Endothelial cell of umbilical vein (primary cell): ENCODE measurements at regions of chr17 and their contacts with region 1.

Region 1: GRCh38 chr17:79741751-79742588 is 11.2 kb downstream of the ENPP7 start:
- DNase-seq: peak; percentile 62
- H3K4me3 ChIP-seq: no peak overlapping the region
- H3K27ac ChIP-seq: no peak overlapping the region
- H3K4me1 ChIP-seq: no peaks in the 10 kb centered on the region
- H3K27me3 ChIP-seq: peaks cover 14 to 29% of the 10 kb centered on the region in 2 experiments
- CTCF ChIP-seq: peak; percentile 88 to 93
- POLR2A ChIP-seq: no peak

Region 2: GRCh38 chr17:79658811-79659207 is 83.2 kb before region 1 on chr17:
- CTCF ChIA-PET with region 1: no interaction called
- POLR2A ChIA-PET with region 1: no interaction called
- dilution Hi-C with region 1: no loop called
- intact Hi-C with region 1: no loop called
- DNase-seq: peak; percentile 32
- H3K4me3 ChIP-seq: no peak overlapping the region
- H3K27ac ChIP-seq: no peak overlapping the region
- H3K4me1 ChIP-seq: peaks cover 10% of the 10 kb centered on the region
- H3K27me3 ChIP-seq: peaks cover 3% of the 10 kb centered on the region in 2 experiments
- CTCF ChIP-seq: peak; percentile 43 to 68
- POLR2A ChIP-seq: no peak

Region 3: DNA sequence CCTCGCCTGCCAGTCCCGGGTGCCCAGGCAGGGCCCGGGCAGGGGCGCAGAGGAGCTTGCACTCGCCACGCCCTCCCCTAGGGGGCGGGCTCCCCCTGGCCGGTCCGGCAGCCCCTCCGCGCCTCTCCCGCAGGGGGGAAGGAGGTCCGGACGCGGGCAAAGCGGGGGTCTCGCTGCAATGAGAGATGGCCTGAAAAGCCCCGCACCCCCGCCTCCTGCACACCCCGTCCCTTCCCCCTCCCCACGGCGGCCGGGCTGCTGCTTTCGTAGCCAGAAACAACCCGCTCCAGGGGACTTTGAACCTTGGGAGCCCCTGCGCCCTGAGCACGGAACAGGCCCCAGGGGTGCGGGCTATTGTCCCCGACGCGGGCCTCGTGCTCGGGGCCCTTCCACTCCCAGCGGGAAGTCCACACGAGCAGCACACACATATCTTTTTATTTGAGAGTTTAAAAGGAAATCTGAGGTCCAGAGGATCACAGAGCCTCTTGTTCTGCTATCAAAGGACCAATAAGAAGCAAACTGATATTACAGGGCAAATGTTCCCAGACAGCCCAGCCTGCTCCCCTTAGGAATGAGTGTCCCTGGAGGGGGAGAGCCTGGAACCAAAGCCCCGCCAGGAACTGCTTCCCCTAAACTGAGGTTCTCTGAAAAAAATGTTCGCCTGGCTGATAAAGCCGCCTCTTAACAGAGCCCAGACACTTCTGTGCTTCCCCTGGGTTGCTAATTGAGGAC is 103.1 kb after region 1 on chr17:
- CTCF ChIA-PET with region 1: interaction called, 15 read pairs
- POLR2A ChIA-PET with region 1: no interaction called
- dilution Hi-C with region 1: no loop called
- intact Hi-C with region 1: no loop called
- DNase-seq: no peak
- H3K4me3 ChIP-seq: no peak overlapping the region
- H3K27ac ChIP-seq: no peak overlapping the region
- H3K4me1 ChIP-seq: peaks cover 11% of the 10 kb centered on the region
- H3K27me3 ChIP-seq: peaks cover 37 to 48% of the 10 kb centered on the region in 2 experiments
- CTCF ChIP-seq: peak; percentile 56 to 88
- POLR2A ChIP-seq: no peak

Region 4: GRCh38 chr17:79923974-79924638 is 182.1 kb after region 1 on chr17:
- CTCF ChIA-PET with region 1: interaction called, 6 read pairs
- POLR2A ChIA-PET with region 1: interaction called, 4 read pairs
- dilution Hi-C with region 1: no loop called
- intact Hi-C with region 1: loop called (anchors 10 kb)
- DNase-seq: peak; percentile 28
- H3K4me3 ChIP-seq: no peak overlapping the region
- H3K27ac ChIP-seq: no peak overlapping the region
- H3K4me1 ChIP-seq: peaks cover under 1% of the 10 kb centered on the region
- H3K27me3 ChIP-seq: no peaks in the 10 kb centered on the region
- CTCF ChIP-seq: peak; percentile 49 to 63
- POLR2A ChIP-seq: no peak

Region 5: GRCh38 chr17:79991140-79991923 is 249.4 kb after region 1 on chr17:
- CTCF ChIA-PET with region 1: interaction called, 21 read pairs
- POLR2A ChIA-PET with region 1: no interaction called
- dilution Hi-C with region 1: no loop called
- intact Hi-C with region 1: loop called (anchors 1 kb)
- DNase-seq: peak; percentile 70
- H3K4me3 ChIP-seq: peak overlapping the region in 1 of 3 experiments; percentile 14
- H3K27ac ChIP-seq: no peak overlapping the region
- H3K4me1 ChIP-seq: peaks cover 20% of the 10 kb centered on the region
- H3K27me3 ChIP-seq: no peaks in the 10 kb centered on the region
- CTCF ChIP-seq: peak; percentile 24 to 79
- POLR2A ChIP-seq: no peak